Activated CD4-positive, alpha-beta T cell treated with anti-CD3 and anti-CD28 coated beads for 36 hours (primary cell): ENCODE measurements at regions of chr17 and their contacts with region 1.

Region 1: GRCh38 chr17:28357061-28357900 is at the start of gene POLDIP2:
- DNase-seq: peak; percentile 98
- ATAC-seq: peak; percentile 99
- H3K4me3 Mint-ChIP-seq: peak within 1 kb of the TSS; percentile 80
- H3K27ac Mint-ChIP-seq: peak within 1 kb of the TSS; percentile 91
- H3K4me1 Mint-ChIP-seq: peaks cover 28% of the 10 kb centered on the region
- H3K27me3 Mint-ChIP-seq: no peaks in the 10 kb centered on the region
- total RNA-seq, gene POLDIP2: 84.9 to 98.4 TPM

Region 2: DNA sequence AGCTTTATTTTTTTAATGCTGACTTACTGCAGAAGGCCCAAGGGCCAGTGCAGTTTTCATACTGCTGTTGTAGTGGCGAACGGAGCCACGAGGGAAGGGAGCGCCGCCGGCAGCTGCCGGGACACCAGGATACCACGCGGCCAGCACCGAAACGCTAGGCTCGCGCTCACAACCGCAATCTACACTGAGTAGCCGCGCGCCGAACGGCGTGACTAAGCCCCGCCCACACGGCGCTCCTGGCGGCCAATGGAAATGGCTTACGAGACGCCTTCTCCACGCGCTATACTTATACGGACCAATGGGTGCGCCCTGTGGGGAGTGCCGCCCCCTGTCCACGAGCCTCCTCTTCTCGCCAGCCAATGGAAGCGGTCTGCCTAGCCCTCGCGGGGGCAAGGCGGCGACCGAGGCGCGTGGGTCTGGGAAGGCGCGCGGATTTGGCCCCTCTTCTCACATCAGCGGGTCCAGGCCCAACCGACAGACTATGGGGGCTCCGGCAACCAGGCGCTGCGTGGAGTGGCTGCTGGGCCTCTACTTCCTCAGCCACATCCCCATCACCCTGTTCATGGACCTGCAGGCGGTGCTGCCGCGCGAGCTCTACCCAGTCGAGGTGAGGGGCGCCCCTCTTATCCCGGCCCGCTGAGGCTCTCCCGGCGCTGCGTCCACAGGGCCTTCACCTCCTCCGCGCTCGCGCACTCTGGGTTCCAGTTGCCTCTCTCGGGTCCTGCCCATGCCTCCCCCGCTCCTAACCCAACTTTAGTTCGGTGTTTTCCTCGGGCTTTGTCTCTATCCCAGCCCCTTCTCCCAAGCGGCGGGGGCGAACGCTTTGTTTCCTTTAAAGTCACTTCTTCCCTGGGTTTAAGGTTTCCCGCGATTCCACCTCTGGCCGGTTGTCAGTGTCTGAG is 38.3 kb before region 1 on chr17 and contains the start of gene TMEM97:
- CTCF ChIA-PET with region 1: interaction called, 3 read pairs
- POLR2A ChIA-PET with region 1: interaction called, 4 read pairs
- intact Hi-C with region 1: loop called in 1 of 2 experiments (anchors 1 kb)
- DNase-seq: peak; percentile 98
- ATAC-seq: peak; percentile 99
- H3K4me3 Mint-ChIP-seq: peak within 1 kb of the TSS; percentile 96
- H3K27ac Mint-ChIP-seq: peak within 1 kb of the TSS; percentile 88
- H3K4me1 Mint-ChIP-seq: peaks cover 30% of the 10 kb centered on the region
- H3K27me3 Mint-ChIP-seq: no peaks in the 10 kb centered on the region
- total RNA-seq, gene TMEM97: 31.0 to 49.3 TPM

Region 3: GRCh38 chr17:28371245-28372202 is 14.2 kb after region 1 on chr17 and contains the start of gene SARM1:
- CTCF ChIA-PET with region 1: interaction called, 7 read pairs
- POLR2A ChIA-PET with region 1: interaction called, 5 read pairs
- intact Hi-C with region 1: loop called (anchors 1 kb)
- DNase-seq: peak; percentile 95
- ATAC-seq: peak; percentile 95
- H3K4me3 Mint-ChIP-seq: peak within 1 kb of the TSS; percentile 76
- H3K27ac Mint-ChIP-seq: peak within 1 kb of the TSS; percentile 86
- H3K4me1 Mint-ChIP-seq: peaks cover 22% of the 10 kb centered on the region
- H3K27me3 Mint-ChIP-seq: no peaks in the 10 kb centered on the region
- total RNA-seq, gene SARM1: 18.1 to 21.9 TPM

Region 4: GRCh38 chr17:28405632-28406472 is 48.6 kb after region 1 on chr17 and contains the start of gene SLC46A1:
- CTCF ChIA-PET with region 1: no interaction called
- POLR2A ChIA-PET with region 1: no interaction called
- intact Hi-C with region 1: loop called in 1 of 2 experiments (anchors 5 kb)
- DNase-seq: peak; percentile 73
- ATAC-seq: peak; percentile 87
- H3K4me3 Mint-ChIP-seq: peak within 1 kb of the TSS; percentile 75
- H3K27ac Mint-ChIP-seq: peak within 1 kb of the TSS; percentile 19
- H3K4me1 Mint-ChIP-seq: peaks cover 14% of the 10 kb centered on the region
- H3K27me3 Mint-ChIP-seq: peaks cover 11% of the 10 kb centered on the region
- total RNA-seq, gene SLC46A1: 3.0 to 4.0 TPM

Region 5: DNA sequence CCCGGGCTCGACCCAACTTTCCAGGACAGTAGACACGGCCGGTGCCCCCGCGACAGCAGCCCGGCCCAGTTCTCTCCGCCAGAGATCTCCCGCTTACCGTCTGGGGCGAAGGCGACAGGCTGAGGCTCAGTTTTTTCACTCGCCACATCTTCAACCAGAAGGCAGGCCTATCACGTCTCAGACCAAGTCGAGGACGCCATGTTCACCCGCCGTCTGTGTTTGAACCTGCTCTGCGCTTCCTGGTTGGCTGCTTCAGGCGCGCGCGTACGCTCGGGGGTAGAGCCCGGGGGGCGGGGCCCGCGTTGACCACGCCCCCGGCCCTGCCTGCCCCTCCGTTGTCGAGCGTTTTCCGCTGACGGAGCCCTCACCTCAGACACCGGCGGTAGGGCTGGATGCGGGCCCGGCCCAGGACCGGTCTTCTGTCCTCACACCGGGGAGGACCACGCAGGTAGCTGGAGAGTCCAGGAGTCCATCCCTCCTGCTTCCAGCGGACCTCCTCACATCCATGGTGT is 241.6 kb after region 1 on chr17 and contains the start of gene SPAG5:
- CTCF ChIA-PET with region 1: no interaction called
- POLR2A ChIA-PET with region 1: no interaction called
- intact Hi-C with region 1: loop called in 1 of 2 experiments (anchors 1 kb)
- DNase-seq: peak; percentile 97
- ATAC-seq: peak; percentile 92
- H3K4me3 Mint-ChIP-seq: peak within 1 kb of the TSS; percentile 89
- H3K27ac Mint-ChIP-seq: peak within 1 kb of the TSS; percentile 98
- H3K4me1 Mint-ChIP-seq: peaks cover 21% of the 10 kb centered on the region
- H3K27me3 Mint-ChIP-seq: no peaks in the 10 kb centered on the region
- total RNA-seq, gene SPAG5: 142 to 165 TPM

Region 6: GRCh38 chr17:28710861-28711722 is 353.8 kb after region 1 on chr17:
- CTCF ChIA-PET with region 1: no interaction called
- POLR2A ChIA-PET with region 1: no interaction called
- intact Hi-C with region 1: loop called in 1 of 2 experiments (anchors 1 kb)
- DNase-seq: peak; percentile 94
- ATAC-seq: peak; percentile 90
- H3K4me3 Mint-ChIP-seq: peak overlapping the region; percentile 80
- H3K27ac Mint-ChIP-seq: peak overlapping the region; percentile 91
- H3K4me1 Mint-ChIP-seq: peaks cover 19% of the 10 kb centered on the region
- H3K27me3 Mint-ChIP-seq: peaks cover 17% of the 10 kb centered on the region